WTC11 (cell line): ENCODE measurements at regions of chr17 and their contacts with region 1.

Region 1: DNA sequence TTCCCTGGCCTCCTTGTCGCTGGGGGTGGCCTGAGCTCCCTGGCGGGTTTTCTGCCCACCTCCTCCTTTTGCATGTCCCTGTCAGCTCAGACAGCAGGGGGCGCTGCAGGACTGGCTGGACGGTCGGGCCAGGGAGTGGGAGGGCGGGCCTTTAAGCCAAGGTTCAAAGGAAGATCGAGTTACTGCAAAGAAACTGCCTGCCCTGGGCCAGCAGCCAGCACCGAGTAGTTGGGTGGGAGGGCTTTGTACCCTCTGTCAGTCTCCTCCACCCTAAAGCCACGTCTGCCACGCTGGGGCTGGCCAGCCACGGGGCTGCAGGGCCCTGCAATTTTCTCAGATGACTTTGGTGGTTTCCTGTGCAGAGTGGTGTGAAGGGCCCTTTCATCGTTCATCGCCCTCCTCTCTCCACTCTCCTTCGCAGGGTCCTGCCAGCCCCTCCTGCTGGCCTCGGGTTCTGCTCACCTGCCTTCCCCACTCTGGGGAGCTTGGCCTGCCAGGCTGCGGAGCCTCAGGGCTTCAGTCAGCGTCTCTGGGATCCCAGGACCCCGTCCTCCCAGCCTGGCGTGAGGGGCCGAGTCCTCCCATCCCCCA is 12.3 kb downstream of the GPR142 start:
- DNase-seq: peak; percentile 98
- ATAC-seq: peak; percentile 93
- H3K4me3 Mint-ChIP-seq: no peak overlapping the region
- H3K27ac Mint-ChIP-seq: no peak overlapping the region
- H3K4me1 Mint-ChIP-seq: peaks cover 13% of the 10 kb centered on the region
- H3K27me3 Mint-ChIP-seq: no peaks in the 10 kb centered on the region; the same call in 1 of the 2 replicates
- CTCF ChIP-seq: peak; percentile 94

Region 2: DNA sequence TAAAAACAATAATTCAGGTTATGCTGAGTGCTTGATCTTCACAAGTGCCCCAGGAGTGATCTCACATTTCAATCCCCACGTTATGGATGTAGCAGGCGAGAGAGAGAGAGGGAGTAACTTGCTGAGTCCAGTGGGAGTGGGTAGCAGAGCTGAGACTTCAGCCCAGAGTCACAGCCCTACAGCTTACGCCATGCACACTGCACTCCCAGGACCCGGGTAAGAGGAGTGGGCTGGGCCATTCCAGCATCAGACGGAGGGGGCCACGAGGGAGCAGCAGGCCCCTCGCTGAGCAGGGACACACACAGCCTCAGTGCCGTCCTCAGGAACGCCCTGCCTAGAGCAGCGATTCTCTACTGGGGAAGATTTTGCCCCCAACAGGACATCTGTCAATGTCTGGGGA is 63.4 kb before region 1 on chr17:
- CTCF ChIA-PET with region 1: no interaction called
- POLR2A ChIA-PET with region 1: no interaction called
- DNase-seq: no peak
- ATAC-seq: no peak
- H3K4me3 Mint-ChIP-seq: no peak overlapping the region
- H3K27ac Mint-ChIP-seq: no peak overlapping the region
- H3K4me1 Mint-ChIP-seq: no peaks in the 10 kb centered on the region
- H3K27me3 Mint-ChIP-seq: no peaks in the 10 kb centered on the region; the same call in none of the 2 replicates
- CTCF ChIP-seq: no peak

Region 3: DNA sequence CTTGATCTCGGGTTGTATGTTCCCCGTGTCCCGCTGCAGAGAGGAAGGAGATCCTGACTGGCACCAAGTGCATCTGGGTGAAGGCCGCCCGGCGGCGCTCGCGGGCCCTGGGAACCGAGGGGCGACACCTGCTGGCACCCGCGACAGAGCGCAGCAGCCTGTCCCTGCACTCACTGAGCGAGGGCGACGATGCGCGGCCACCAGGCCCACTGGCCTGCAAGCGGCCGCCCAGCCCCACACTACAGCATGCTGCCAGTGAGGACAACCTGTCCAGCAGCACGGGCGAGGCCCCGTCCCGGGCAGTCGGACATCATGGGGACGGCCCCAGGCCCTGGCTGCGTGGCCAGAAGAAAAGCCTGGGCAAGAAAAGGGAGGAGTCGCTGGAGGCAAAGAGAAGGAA is 25.5 kb before region 1 on chr17:
- CTCF ChIA-PET with region 1: interaction called, 18 read pairs
- POLR2A ChIA-PET with region 1: no interaction called
- DNase-seq: peak; percentile 88
- ATAC-seq: peak; percentile 67
- H3K4me3 Mint-ChIP-seq: no peak overlapping the region
- H3K27ac Mint-ChIP-seq: no peak overlapping the region
- H3K4me1 Mint-ChIP-seq: peaks cover 10% of the 10 kb centered on the region
- H3K27me3 Mint-ChIP-seq: peaks cover 85% of the 10 kb centered on the region
- CTCF ChIP-seq: peak; percentile 65

Region 4: GRCh38 chr17:74408262-74408661 is 28.7 kb after region 1 on chr17:
- CTCF ChIA-PET with region 1: interaction called, 16 read pairs
- POLR2A ChIA-PET with region 1: no interaction called
- DNase-seq: no peak
- ATAC-seq: no peak
- H3K4me3 Mint-ChIP-seq: no peak overlapping the region
- H3K27ac Mint-ChIP-seq: no peak overlapping the region
- H3K4me1 Mint-ChIP-seq: peaks cover 16% of the 10 kb centered on the region
- H3K27me3 Mint-ChIP-seq: no peaks in the 10 kb centered on the region
- CTCF ChIP-seq: no peak

Region 5: DNA sequence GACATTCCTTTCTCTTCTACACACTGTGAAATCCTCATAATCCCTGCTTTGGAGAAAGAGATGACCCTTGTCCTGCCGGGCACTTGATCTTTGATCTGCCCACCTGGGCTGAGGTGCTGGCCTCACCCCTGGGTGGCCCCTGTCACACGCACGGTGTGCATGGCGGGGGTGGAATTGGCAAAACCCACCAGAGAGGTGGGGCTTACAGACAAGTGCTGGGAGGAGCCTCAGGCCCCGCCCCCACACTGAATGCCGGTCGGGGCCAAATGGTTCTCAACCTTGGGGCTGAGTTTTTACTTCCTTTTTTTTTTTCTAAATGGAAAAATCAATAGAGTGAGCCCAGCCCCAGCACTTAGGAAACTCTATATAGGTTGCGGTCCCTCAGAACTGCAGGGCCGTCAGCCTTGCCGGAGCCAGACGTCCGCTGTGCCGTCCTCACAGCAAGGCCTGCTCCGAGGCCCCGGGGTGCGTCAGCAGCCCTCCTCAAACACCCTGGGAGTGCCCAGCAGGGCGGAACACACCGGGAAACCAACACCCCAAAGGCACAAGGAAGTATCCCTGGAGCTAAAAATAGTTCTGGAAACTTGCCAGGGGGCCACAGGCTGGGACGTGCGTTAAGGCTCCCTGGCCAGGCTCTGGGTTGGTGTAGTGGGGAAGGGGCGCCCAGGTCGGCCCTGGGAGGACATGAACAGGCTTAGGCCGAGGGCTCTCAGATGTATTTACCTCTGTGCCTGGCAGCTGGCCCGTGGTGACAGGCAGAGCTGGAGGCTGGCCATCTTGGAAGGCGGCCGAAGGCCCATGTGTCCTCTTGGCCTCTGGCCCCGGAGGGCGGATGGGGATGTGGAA is 63.3 kb after region 1 on chr17:
- CTCF ChIA-PET with region 1: interaction called, 51 read pairs
- POLR2A ChIA-PET with region 1: interaction called, 3 read pairs
- DNase-seq: peak; percentile 66
- ATAC-seq: peak; percentile 80
- H3K4me3 Mint-ChIP-seq: peak overlapping the region; percentile 20
- H3K27ac Mint-ChIP-seq: no peak overlapping the region
- H3K4me1 Mint-ChIP-seq: peaks cover 25% of the 10 kb centered on the region
- H3K27me3 Mint-ChIP-seq: no peaks in the 10 kb centered on the region
- CTCF ChIP-seq: no peak

Region 6: GRCh38 chr17:74493381-74493833 is 113.8 kb after region 1 on chr17:
- CTCF ChIA-PET with region 1: interaction called, 24 read pairs
- POLR2A ChIA-PET with region 1: no interaction called
- DNase-seq: peak; percentile 88
- ATAC-seq: peak; percentile 96
- H3K4me3 Mint-ChIP-seq: no peak overlapping the region
- H3K27ac Mint-ChIP-seq: no peak overlapping the region
- H3K4me1 Mint-ChIP-seq: peaks cover 3% of the 10 kb centered on the region; the same call in 1 of the 2 replicates
- H3K27me3 Mint-ChIP-seq: peaks cover 6% of the 10 kb centered on the region
- CTCF ChIP-seq: peak; percentile 83

Region 7: DNA sequence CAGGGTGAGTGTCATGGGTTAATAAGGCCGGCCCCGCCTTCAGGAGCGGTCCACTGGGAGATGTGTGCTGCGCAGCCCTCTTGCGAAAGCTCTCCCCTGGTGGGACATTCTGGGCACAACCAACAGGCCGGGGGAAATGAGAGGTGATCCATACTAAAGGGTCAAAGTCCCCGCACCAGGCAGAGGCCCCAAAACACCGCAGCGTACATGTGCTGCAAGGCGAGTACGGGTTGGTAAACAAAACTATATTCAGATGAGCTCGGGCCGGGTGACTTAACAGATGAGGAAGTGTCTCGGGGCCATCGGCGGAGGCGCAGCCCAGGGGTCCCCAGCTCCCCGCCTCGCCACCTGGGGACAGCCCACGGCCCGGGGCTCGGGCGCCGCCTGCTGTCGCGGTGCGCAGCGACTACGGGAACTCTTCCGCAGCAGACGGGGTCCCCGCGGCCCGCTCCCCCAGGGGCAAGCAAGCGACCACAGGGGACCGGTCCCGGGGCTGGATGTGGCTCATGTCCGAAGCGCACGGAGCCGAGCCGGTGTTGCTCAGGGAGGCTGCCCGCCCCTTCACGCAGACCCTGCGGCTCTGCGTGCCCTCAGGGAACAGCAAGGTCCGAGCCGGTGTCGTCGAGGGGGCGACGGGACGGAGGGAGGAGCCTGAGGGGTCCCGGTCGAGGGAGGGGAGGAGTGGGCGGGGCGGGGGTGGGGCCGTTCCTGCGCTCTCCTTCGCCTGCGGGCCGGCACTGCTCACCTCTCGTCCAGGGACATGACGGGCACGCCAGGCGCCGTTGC is 357.1 kb after region 1 on chr17 and contains the start of gene RAB37:
- CTCF ChIA-PET with region 1: interaction called, 10 read pairs
- POLR2A ChIA-PET with region 1: no interaction called
- DNase-seq: peak; percentile 70
- ATAC-seq: peak; percentile 58
- H3K4me3 Mint-ChIP-seq: peak within 1 kb of the TSS; percentile 81
- H3K27ac Mint-ChIP-seq: peak within 1 kb of the TSS; percentile 22; the same call in 1 of the 2 replicates
- H3K4me1 Mint-ChIP-seq: peaks cover 27% of the 10 kb centered on the region
- H3K27me3 Mint-ChIP-seq: peaks cover 18% of the 10 kb centered on the region
- CTCF ChIP-seq: no peak
- total RNA-seq, gene RAB37: 8.8 to 9.4 TPM (median 8.9 TPM) in 3 replicates